Panc1 (cell line): ENCODE measurements at regions of chr17 and their contacts with region 1.

Region 1: DNA sequence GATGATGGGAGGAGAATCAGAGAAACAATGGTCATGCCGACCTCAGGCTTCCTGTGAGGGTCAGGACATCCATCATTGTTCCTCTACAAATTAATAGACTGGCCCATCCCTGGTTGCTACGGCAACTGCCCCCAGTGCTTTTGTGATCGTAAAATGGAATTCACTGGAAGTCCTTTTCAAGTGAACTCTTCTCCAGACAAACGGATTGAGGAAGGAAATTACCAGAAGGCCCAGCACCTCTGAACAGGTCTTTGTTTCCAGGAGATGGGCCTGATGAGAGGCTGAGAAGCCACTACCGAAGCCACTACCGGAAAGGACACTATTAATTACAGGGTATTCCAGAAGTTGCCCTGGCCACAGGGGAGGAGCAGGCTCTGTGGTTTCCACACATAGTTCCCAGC is 126.0 kb downstream of the MGAT5B start:
- DNase-seq: no peak
- ATAC-seq: no peak
- H3K4me3 ChIP-seq: no peak overlapping the region
- H3K27ac ChIP-seq: no peak overlapping the region
- H3K4me1 ChIP-seq: no peaks in the 10 kb centered on the region
- H3K27me3 ChIP-seq: no peaks in the 10 kb centered on the region
- CTCF ChIP-seq: no peak

Region 2: DNA sequence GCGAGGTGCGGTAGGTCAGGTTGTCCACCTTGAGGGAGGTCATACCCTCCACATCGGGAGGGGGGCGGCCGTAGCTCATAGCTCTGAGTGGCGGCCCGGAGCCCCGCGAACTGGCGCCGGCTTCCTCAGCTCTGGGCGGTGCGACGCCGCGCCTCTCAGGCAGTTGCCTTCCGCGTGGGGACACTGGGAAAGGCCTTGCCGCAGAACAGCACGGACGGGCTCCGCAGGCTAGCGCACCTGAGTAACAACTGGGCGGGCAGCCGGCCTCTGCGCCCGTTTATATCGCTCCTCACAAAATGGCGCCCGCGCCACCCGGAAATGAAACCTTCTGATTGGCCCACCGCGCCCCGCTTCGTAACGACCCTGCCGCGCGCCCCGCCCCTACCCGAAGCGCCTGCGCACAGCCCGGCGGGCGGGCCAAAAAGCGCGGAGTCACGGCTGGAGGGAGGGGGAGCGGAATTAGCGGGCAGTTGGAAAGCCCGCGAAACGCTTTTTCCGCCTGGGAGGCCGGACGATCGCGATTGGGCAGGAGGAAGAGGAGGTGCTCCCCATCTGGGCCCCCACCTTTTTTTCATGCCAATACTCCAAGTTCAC is 257.1 kb before region 1 on chr17 and contains the start of gene SRSF2:
- CTCF ChIA-PET with region 1: no interaction called
- POLR2A ChIA-PET with region 1: interaction called, 18 read pairs
- in situ Hi-C with region 1: no loop called
- intact Hi-C with region 1: no loop called
- DNase-seq: peak; percentile 76
- ATAC-seq: peak; percentile 87
- H3K4me3 ChIP-seq: peak within 1 kb of the TSS; percentile 96 to 97
- H3K27ac ChIP-seq: peak within 1 kb of the TSS; percentile 98
- H3K4me1 ChIP-seq: peaks cover 42% of the 10 kb centered on the region
- H3K27me3 ChIP-seq: no peaks in the 10 kb centered on the region
- CTCF ChIP-seq: no peak
- total RNA-seq, gene SRSF2: 436 TPM

Region 3: DNA sequence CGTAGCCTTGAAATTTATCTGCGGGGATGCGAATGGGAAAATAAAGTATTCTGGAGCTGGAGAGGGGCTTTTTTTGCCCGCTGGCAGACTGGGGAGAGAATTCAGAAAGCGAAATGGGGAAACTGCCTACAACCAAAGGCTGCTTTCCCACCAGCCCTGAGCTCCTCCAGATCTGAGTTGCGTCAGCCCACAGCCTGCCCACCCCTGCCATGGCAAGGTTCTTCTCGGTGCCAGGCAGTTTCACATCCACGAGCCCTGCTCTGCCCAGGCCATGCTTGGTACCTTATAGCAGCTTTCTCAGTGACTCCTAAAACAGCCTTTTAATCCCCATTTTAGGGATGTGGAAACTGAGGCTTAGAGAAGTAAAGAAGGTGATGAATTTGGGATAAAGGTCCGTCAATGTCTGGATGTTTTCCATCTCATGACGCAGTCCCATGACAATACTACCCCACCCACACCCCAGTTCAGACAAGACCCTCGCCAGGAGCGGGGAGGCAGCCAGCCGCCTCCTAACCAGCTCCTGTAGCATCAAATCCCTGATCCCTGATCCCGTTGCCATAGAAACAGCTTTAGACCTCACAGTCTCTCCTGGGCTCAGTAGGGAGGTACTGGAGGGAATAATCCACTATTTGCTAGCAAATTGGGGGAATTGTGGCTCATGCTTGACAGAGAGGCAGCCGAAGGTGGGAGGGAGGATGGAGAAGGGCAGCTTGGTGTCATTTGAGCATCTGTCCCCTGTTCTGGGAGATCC is 12.5 kb before region 1 on chr17:
- CTCF ChIA-PET with region 1: interaction called, 5 read pairs
- POLR2A ChIA-PET with region 1: interaction called, 18 read pairs
- in situ Hi-C with region 1: no loop called
- intact Hi-C with region 1: no loop called
- DNase-seq: no peak
- ATAC-seq: no peak
- H3K4me3 ChIP-seq: no peak overlapping the region
- H3K27ac ChIP-seq: no peak overlapping the region
- H3K4me1 ChIP-seq: 0 out of 2 replicates have a peak, but pooled peaks cover 2% of the 10 kb centered on the region
- H3K27me3 ChIP-seq: no peaks in the 10 kb centered on the region
- CTCF ChIP-seq: no peak

Region 4: GRCh38 chr17:77214743-77215142 is 220.5 kb after region 1 on chr17:
- CTCF ChIA-PET with region 1: no interaction called
- POLR2A ChIA-PET with region 1: no interaction called
- in situ Hi-C with region 1: no loop called
- intact Hi-C with region 1: no loop called
- DNase-seq: no peak
- ATAC-seq: peak; percentile 73
- H3K4me3 ChIP-seq: no peak overlapping the region
- H3K27ac ChIP-seq: no peak overlapping the region
- H3K4me1 ChIP-seq: no peaks in the 10 kb centered on the region
- H3K27me3 ChIP-seq: no peaks in the 10 kb centered on the region
- CTCF ChIP-seq: no peak; the same call in 1 of the 2 replicates